MCF 10A (cell line): ENCODE measurements at regions of chr1 and their contacts with region 1.

Region 1: DNA sequence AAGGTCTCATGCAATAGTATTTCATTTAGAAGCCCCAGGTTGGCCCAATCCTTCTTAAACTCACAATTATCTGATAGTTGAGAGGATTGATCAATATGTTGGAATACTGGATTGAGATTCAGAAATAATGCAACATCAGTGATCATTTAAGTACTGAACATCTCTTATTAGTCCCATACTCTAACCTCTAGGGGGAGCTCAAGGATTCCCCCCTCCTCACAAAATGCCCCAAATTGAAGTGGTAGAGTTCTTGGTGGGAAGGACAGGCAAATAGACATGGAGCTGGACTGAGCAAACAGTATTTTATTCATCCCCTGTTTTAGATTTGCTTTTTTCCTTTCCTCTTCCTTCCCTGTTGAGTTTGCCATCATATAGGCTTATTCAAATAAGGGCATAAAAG is 62.8 kb downstream of the NGF start:
- DNase-seq: peak; percentile 48
- H3K4me3 Mint-ChIP-seq: no peak overlapping the region
- H3K27ac Mint-ChIP-seq: no peak overlapping the region
- H3K4me1 Mint-ChIP-seq: no peaks in the 10 kb centered on the region
- H3K27me3 Mint-ChIP-seq: no peaks in the 10 kb centered on the region
- CTCF ChIP-seq: peak; percentile 54

Region 2: GRCh38 chr1:114861384-114861783 is 413.8 kb before region 1 on chr1:
- CTCF ChIA-PET with region 1: no interaction called
- POLR2A ChIA-PET with region 1: no interaction called
- intact Hi-C with region 1: no loop called
- DNase-seq: no peak
- H3K4me3 Mint-ChIP-seq: no peak overlapping the region
- H3K27ac Mint-ChIP-seq: no peak overlapping the region
- H3K4me1 Mint-ChIP-seq: no peaks in the 10 kb centered on the region
- H3K27me3 Mint-ChIP-seq: peaks cover 50% of the 10 kb centered on the region
- CTCF ChIP-seq: no peak

Region 3: DNA sequence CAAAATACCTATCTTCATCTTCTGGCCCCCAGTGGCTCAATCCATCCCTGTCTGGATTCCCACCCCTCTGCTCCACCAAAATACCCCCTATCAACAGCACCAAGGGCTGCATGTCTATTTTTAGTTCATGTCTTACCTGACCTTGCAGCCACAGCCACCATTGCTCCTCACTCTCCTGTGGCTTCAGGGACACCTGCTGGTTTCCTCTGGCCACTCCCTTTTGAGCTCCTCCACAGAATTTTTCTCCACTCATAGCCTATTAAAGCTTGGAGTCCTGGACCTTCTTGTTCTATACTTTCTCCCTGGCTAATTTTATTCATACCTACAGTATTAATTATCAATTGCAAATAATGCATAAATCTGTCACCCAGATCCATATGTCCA is 188.1 kb after region 1 on chr1:
- CTCF ChIA-PET with region 1: interaction called, 16 read pairs
- POLR2A ChIA-PET with region 1: no interaction called
- intact Hi-C with region 1: loop called (anchors 1 kb)
- DNase-seq: peak; percentile 40
- H3K4me3 Mint-ChIP-seq: no peak overlapping the region
- H3K27ac Mint-ChIP-seq: no peak overlapping the region
- H3K4me1 Mint-ChIP-seq: no peaks in the 10 kb centered on the region
- H3K27me3 Mint-ChIP-seq: no peaks in the 10 kb centered on the region
- CTCF ChIP-seq: peak; percentile 42

Region 4: GRCh38 chr1:115506926-115507589 is 231.8 kb after region 1 on chr1:
- CTCF ChIA-PET with region 1: no interaction called
- POLR2A ChIA-PET with region 1: no interaction called
- intact Hi-C with region 1: loop called (anchors 1 kb)
- DNase-seq: peak; percentile 48
- H3K4me3 Mint-ChIP-seq: no peak overlapping the region
- H3K27ac Mint-ChIP-seq: no peak overlapping the region
- H3K4me1 Mint-ChIP-seq: no peaks in the 10 kb centered on the region
- H3K27me3 Mint-ChIP-seq: no peaks in the 10 kb centered on the region
- CTCF ChIP-seq: peak; percentile 36